Testis (tissue), 5 donors: ENCODE measurements at regions of chr2 and their contacts with region 1.

Region 1: DNA sequence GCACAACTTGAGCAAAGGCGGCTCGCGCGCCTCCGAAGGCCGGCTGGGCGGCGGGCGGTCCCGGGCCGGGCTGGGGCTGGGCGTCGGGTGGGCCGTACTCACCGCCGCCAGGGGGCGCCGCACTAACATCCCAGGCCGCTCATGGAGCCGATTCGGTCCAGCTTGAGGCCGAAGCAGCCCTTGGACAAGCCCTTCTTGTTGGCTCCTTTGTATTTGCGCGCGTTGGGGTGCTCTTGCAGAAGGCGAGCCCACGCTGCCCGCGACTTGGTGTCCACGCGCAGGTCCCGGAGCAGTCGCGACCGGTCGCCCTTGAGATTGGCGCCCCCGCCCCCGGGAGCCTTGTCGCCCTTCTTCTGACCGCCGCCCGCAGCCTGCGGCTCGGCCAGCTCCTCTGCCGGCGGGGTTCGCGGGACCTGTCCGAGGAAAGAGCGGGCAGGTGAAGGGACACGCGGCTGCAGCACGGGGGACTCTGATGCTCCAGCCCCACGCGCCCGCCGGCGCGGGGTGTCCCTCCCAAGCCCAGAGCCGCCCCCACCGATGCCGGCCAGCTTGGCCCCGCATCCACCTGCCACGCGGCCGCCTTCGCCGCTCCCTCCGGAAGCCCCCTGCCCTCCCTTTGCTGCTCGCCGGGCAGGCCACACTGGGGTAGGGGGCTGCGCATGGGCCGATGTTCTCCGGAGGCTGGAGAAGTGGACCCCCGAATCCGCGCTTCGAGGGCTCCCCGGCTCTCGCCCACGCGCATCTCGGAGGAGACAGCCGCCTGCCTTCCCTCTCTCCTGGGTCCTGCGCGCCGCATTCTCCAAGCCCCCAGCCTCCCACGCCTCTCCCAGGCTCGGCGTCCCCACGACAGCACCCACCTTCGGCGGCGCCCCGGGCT is 655 bp downstream of the NPPC start:
- DNase-seq: peak; percentile 92
- H3K4me3 ChIP-seq: peak overlapping the region; percentile 31 to 34
- H3K27ac ChIP-seq: no peak overlapping the region
- H3K4me1 ChIP-seq: peaks cover 14% of the 10 kb centered on the region
- H3K27me3 ChIP-seq: no peaks in the 10 kb centered on the region
- CTCF ChIP-seq: peak; percentile 85 to 94 (median 89)
- POLR2A ChIP-seq: no peak

Region 2: DNA sequence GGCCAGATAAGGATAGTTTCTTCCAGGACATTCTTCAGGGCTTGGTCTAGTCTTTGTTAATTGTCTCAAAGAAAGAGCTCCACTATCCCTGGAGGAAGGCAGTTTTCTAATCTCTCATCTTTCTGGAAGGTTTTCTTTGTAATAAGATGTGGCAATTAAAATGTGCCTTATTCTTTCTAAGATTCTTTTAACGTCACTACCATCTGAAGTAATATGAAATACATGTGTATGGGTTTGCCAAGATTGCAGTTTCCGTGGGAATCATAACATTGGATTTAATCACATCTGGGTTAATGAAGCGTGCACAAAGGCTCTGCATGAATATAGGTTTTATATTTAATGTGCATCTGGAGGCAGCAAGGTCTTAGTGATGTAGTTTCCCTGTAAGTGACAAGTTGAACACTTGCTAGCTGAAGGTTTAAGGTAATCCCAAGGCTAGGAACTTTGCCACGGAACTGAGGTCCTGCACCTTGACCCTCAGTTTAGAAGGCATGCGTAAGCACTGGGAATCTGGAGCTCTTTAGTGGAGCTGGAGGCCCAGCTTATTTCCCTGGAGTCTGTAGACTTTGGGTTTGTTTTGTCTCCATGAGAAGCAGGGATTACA is 61.7 kb after region 1 on chr2:
- intact Hi-C with region 1: no loop called
- DNase-seq: no peak
- H3K4me3 ChIP-seq: no peak overlapping the region
- H3K27ac ChIP-seq: peak overlapping the region in 1 of 2 donors; percentile 4
- H3K4me1 ChIP-seq: peaks cover 15% of the 10 kb centered on the region
- H3K27me3 ChIP-seq: no peaks in the 10 kb centered on the region
- CTCF ChIP-seq: no peak
- POLR2A ChIP-seq: no peak

Region 3: DNA sequence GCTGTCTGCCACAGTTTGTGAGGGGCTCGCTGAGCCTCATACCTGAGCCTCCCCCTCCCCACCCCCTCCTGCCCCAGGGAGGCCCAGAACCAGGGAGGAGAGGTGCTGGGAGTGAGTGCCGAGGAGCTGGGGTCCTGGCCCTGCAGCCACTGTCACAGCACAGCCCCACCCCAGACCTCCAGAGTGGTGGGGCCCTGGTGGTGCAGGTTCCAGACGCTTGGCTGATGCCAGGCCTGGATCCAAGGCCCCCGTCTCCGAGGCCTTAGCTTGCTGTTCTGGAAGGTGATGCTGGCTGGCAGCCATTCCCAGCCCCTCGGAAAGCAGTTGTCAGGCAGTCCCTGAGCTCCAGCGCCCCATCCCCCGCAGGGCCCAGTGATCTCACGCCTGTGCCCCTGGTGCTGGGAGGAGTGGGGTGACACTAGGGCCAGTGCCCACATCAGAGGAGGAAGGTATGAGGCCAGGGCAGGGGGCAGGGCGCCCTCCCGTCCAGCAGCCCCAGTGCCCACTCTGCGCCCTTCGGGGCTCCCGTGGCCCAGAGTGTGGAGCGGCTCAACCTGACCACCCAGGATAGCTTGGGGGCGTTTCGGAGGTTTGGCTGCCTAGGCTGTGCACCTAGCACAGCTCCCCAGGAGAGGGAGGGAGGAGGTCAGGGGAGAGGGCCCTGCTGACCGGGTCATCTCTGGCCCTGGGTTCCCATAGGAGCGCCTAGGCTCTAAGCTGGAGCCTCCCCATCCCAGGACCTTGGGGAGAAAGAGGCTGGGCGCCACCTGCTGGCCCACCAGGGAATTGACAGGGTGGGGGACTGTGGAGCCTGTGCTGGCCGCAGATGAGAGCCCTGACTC is 400.1 kb after region 1 on chr2:
- intact Hi-C with region 1: loop called (anchors 2 kb)
- DNase-seq: peak; percentile 58
- H3K4me3 ChIP-seq: no peak overlapping the region
- H3K27ac ChIP-seq: no peak overlapping the region
- H3K4me1 ChIP-seq: peaks cover 12% of the 10 kb centered on the region
- H3K27me3 ChIP-seq: no peaks in the 10 kb centered on the region
- CTCF ChIP-seq: peak; percentile 59 to 70 (median 62)
- POLR2A ChIP-seq: no peak